ENCODE measurements at regions of chr14 and their contacts with region 1.

Region 1: GRCh38 chr14:39432179-39432618 is at the start of gene FBXO33:
- H3K4me3 Mint-ChIP-seq: peak within 1 kb of the TSS; percentile 86
- H3K27ac Mint-ChIP-seq: peak within 1 kb of the TSS; percentile 98
- H3K4me1 Mint-ChIP-seq: peaks cover 33% of the 10 kb centered on the region
- H3K27me3 Mint-ChIP-seq: no peaks in the 10 kb centered on the region

Region 2: GRCh38 chr14:39102969-39103957 is 328.9 kb before region 1 on chr14 and contains the start of gene SEC23A:
- intact Hi-C with region 1: loop called (anchors 5 kb)
- H3K4me3 Mint-ChIP-seq: peak within 1 kb of the TSS; percentile 97
- H3K27ac Mint-ChIP-seq: peak within 1 kb of the TSS; percentile 92
- H3K4me1 Mint-ChIP-seq: peaks cover 35% of the 10 kb centered on the region
- H3K27me3 Mint-ChIP-seq: no peaks in the 10 kb centered on the region

Region 3: GRCh38 chr14:39174560-39175444 is 257.4 kb before region 1 on chr14 and contains the start of gene PNN:
- intact Hi-C with region 1: loop called (anchors 1 kb)
- H3K4me3 Mint-ChIP-seq: peak within 1 kb of the TSS; percentile 92
- H3K27ac Mint-ChIP-seq: peak within 1 kb of the TSS; percentile 95
- H3K4me1 Mint-ChIP-seq: peaks cover 21% of the 10 kb centered on the region
- H3K27me3 Mint-ChIP-seq: no peaks in the 10 kb centered on the region

Region 4: DNA sequence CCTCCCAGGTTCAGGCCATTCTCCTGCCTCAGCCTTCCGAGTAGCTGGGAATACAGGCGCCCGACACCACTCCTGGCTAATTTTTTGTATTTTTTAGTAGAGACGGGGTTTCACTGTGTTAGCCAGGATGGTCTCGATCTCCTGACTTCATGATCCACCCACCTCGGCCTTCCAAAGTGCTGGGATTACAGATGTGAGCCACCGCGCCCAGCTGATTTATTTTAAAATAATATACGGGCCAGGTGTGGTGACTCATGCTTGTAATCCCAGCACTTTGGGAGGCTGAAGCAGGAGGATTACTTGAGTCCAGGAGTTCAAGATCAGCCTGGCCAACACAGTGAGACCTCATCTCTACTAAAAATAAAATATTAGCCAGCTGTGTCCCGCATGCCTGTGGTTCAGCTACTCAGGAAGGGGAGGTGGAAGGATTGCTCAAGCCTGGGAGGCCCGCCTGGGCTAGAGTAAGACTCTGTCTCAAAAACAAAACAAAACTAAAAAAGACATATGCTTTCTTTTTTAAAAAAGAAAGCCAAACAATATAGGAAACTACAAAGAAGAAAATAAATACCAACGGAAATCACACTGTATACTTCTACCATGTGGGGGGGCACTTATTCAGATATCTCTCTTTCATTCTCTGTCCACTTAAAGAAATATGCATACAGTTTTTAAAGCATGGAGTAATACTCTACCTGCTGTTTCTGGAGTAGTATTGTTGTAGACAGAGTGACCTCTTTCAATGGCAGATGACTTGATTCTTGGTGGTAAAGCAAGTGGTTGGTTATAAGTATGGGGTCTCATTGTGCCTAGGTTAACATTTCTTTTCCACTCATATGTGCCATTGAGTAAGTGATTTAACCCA is 199.4 kb before region 1 on chr14:
- intact Hi-C with region 1: no loop called
- H3K4me3 Mint-ChIP-seq: no peak overlapping the region
- H3K27ac Mint-ChIP-seq: peak overlapping the region; percentile 30
- H3K4me1 Mint-ChIP-seq: peaks cover 7% of the 10 kb centered on the region
- H3K27me3 Mint-ChIP-seq: no peaks in the 10 kb centered on the region

Region 5: DNA sequence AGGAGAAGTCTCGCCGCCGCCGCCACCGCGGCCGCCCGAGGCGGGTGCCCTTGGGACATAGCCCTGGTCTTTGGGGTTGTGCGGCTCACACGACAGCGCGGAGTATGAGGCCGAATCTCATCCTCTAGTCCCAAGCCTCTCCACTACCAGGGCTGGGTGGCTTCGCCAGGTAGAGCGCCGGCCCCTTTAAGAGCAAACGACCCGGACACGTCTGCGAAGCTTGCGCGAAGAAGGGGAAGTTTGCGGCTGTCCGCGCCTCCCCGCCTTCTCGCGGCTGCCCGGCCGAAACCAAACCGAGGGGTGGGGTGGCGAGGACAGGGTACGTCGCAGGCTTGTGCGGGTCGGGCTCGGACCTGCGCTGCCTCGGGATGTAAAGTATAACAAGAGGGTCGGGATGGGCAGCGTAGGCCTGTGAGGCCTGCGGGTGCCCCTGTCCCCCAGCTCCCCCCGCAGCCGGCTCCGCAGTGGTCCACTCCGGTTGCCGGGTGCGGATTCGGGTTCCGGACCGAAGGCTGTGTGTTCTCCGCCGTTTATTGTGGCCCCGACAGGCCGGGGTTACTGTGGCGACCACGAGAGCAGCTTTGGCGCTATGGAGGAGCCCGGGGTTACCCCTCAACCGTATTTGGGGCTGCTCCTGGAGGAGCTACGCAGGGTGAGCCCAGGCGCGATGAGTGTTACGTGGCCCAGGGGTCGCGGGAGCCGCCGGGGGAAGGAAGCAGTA is 165.2 kb before region 1 on chr14:
- intact Hi-C with region 1: loop called (anchors 1 kb)
- H3K4me3 Mint-ChIP-seq: peak overlapping the region; percentile 99
- H3K27ac Mint-ChIP-seq: peak overlapping the region; percentile 99
- H3K4me1 Mint-ChIP-seq: peaks cover 49% of the 10 kb centered on the region
- H3K27me3 Mint-ChIP-seq: no peaks in the 10 kb centered on the region

Region 6: DNA sequence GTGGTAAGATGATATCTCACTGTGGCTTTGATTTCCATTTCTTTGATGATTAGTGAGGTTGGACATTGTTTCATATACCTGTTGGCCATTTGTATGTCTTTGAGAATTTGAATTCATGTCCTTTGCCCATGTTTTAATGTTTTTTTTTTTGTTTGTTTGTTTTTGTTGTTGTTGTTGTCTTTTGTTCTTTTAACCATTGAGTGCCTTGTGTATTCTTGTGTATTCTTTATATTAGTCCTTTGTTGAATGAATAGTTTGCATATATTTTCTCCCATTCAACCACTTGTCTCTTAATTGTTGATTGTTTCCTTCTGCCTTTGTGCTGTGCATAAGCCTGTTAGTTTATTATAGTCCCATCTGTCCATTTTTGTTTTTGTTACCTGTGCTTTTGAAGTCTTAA is 71.9 kb before region 1 on chr14:
- intact Hi-C with region 1: no loop called
- H3K4me3 Mint-ChIP-seq: no peak overlapping the region
- H3K27ac Mint-ChIP-seq: no peak overlapping the region
- H3K4me1 Mint-ChIP-seq: peaks cover 7% of the 10 kb centered on the region
- H3K27me3 Mint-ChIP-seq: no peaks in the 10 kb centered on the region

Region 7: GRCh38 chr14:39395555-39396254 is 36.5 kb before region 1 on chr14:
- intact Hi-C with region 1: no loop called
- H3K4me3 Mint-ChIP-seq: no peak overlapping the region
- H3K27ac Mint-ChIP-seq: no peak overlapping the region
- H3K4me1 Mint-ChIP-seq: no peaks in the 10 kb centered on the region
- H3K27me3 Mint-ChIP-seq: no peaks in the 10 kb centered on the region

Region 8: GRCh38 chr14:39417014-39417413 is 15.2 kb before region 1 on chr14:
- intact Hi-C with region 1: no loop called
- H3K4me3 Mint-ChIP-seq: no peak overlapping the region
- H3K27ac Mint-ChIP-seq: no peak overlapping the region
- H3K4me1 Mint-ChIP-seq: peaks cover under 1% of the 10 kb centered on the region
- H3K27me3 Mint-ChIP-seq: no peaks in the 10 kb centered on the region

Measured in dendritic cell treated with granulocyte-macrophage colony-stimulating factor and Interleukin-4, amounts not matched to agents 40 ng/mL and 50 ng/mL, for 4 days (primary cell).